ENCODE measurements at regions of chr18 and their contacts with region 1.

Region 1: GRCh38 chr18:76982841-76983587 is 149.6 kb downstream of the MBP start:
- DNase-seq: peak; percentile 91
- CTCF ChIP-seq: peak; percentile 92

Region 2: DNA sequence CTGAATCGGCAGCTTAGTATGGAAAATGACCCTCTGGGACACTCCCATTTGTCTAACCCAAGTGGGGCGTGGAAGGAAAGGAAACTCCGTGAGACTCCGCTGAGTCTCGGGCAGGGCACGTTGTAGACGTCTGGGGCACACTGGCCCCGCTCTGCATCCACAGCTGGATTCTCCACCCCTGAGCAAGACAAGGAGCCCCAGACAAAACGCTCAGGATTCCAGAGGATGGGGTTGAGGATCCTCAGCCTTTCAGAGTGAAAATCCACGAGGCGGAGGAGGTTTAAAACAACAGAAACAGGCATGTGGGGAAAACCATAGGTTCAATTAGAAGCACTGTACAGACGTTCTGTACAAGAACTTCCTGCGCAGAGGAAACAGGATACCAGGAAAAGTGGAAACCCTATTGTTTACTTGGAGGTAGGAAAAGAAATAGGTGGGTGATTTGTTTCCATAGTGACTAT is 285.5 kb before region 1 on chr18:
- CTCF ChIA-PET with region 1: no interaction called
- POLR2A ChIA-PET with region 1: no interaction called
- DNase-seq: no peak
- CTCF ChIP-seq: no peak

Region 3: DNA sequence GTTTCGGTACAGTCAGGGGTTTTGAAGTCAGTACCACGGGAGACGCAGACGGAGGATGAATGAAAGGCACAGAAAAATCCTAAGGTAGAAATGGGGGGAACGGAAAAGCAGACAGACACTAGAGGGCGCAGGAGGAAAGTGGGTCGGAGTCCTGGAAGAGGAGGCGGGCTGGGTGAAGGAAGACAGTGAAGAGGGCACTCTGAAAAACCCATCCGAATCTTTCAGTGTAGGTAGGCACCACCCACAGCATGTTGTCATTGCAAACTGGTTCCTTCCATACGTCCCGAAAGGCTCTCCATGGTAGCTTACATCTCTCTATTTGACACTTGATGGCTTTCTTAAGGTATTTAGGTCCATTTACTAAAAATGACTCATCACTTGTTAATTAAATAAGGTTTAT is 179.2 kb before region 1 on chr18:
- CTCF ChIA-PET with region 1: interaction called, 113 read pairs
- POLR2A ChIA-PET with region 1: no interaction called
- DNase-seq: peak; percentile 71
- CTCF ChIP-seq: peak; percentile 88

Region 4: DNA sequence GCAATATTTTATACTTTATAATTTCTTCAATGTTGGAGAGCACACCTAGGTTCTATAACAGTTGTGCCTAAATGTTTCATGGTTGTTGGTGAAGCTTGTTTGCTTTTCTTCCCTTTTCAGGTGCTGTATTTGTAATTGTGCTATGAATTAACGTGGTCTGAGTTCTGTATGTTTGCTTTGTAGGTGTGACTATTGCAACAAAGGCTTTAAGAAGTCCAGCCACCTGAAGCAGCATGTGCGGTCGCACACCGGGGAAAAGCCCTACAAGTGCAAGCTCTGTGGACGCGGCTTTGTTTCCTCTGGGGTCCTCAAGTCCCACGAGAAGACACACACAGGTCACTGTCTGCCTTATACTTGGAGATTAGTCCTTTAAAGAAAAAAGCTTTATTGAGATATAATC is 69.5 kb before region 1 on chr18:
- CTCF ChIA-PET with region 1: interaction called, 190 read pairs
- POLR2A ChIA-PET with region 1: no interaction called
- DNase-seq: no peak
- CTCF ChIP-seq: no peak

Region 5: GRCh38 chr18:76937597-76937996 is 45.4 kb before region 1 on chr18:
- CTCF ChIA-PET with region 1: interaction called, 18 read pairs
- POLR2A ChIA-PET with region 1: no interaction called
- DNase-seq: no peak
- CTCF ChIP-seq: no peak

Region 6: DNA sequence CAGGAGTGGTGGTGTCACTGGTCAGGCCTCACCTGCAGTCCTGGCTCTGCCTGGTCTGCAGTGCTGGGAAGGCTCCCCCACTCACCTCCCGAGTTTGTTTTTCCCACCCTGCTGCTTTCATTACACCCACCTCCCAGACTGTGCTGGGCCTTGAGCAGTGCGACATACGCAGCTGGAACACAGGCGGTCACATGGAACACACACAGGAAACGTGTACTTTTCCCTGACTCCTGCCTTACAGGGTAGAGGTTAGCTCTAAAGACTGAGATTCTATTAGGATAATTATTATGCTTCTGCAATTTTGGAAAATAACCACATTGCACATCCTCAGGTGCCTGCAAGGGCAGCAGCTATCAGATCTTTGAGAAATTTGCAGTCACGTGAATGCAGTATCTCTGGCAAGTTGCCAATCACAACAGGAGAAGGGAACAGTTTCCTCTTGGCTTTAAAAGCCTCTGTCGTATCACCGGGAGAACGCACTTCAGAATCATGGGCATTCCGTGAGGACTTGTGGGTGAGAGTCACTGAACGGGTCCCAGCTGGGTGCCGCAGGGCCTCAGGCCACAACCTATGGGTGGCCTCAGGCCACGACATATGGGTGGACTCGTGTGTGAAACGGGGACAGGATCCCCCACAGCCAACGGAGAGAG is 24.2 kb before region 1 on chr18:
- CTCF ChIA-PET with region 1: interaction called, 40 read pairs
- POLR2A ChIA-PET with region 1: interaction called, 3 read pairs
- DNase-seq: no peak
- CTCF ChIP-seq: no peak

Region 7: DNA sequence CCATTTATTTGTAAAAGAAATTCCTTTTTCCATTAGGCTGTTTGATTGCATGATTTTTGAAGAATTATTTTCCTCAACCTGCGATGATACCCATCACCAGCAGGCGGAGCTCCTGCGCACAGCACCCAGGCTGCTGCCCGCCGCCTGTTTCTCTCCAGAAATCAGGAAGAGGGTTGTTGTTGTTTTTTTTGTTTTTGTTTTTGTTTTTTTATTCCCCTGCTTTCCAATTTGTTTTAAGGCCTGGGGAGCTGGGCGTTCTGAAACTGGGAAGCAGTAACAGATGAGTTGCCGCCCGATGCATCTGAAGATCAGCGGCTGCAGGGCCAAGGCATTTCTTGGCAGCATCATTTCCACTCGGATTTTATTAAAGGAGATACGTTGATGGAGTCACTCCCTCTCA is 17.5 kb after region 1 on chr18:
- CTCF ChIA-PET with region 1: interaction called, 75 read pairs
- POLR2A ChIA-PET with region 1: no interaction called
- DNase-seq: peak; percentile 74
- CTCF ChIP-seq: peak; percentile 96